ENCODE measurements at regions of chr4 and their contacts with region 1.

Region 1: GRCh38 chr4:42627885-42628646 is 28.8 kb downstream of the ATP8A1 start:
- DNase-seq: peak; percentile 81 to 88 (median 86)
- ATAC-seq: peak; percentile 97 to 100 (median 99)
- H3K4me3 ChIP-seq: peak overlapping the region in 1 of 12 donors; percentile 5
- H3K27ac ChIP-seq: peak overlapping the region in 9 of 12 donors; percentile 0 to 66 (median 43)
- H3K4me1 ChIP-seq: peaks cover 0 to 46% (median 25%) of the 10 kb centered on the region in 12 donors
- H3K27me3 ChIP-seq: no peaks in the 10 kb centered on the region
- CTCF ChIP-seq: no peak
- POLR2A ChIP-seq: no peak

Region 2: DNA sequence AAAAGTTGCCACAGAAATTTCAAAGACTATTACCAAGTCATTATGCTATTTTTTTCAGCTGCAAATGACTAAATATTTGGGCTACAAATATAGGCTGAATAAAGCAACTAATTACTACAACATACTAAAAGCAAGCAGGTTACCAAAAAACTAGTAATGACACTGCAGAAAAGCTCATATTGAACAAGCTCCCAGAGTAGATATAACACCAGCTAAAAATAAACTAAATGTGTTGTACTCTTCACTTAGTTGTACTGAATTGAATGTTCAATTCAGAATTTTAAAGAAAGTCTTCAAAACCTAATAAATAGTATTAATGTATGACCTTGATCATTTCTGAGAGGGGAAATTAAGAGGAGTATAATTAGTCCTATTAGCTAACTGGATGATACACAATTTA is 16.8 kb after region 1 on chr4:
- intact Hi-C with region 1: loop called in 1 of 10 experiments (anchors 1 kb)
- DNase-seq: no peak
- ATAC-seq: peak in 2 of 4 donors; percentile 38 to 40
- H3K4me3 ChIP-seq: no peak overlapping the region
- H3K27ac ChIP-seq: peak overlapping the region in 1 of 12 donors; percentile 46
- H3K4me1 ChIP-seq: peaks cover 0 to 34% (median 12%) of the 10 kb centered on the region in 12 donors
- H3K27me3 ChIP-seq: no peaks in the 10 kb centered on the region
- CTCF ChIP-seq: no peak
- POLR2A ChIP-seq: no peak